ENCODE measurements at regions of chrX and their contacts with region 1.

Region 1: DNA sequence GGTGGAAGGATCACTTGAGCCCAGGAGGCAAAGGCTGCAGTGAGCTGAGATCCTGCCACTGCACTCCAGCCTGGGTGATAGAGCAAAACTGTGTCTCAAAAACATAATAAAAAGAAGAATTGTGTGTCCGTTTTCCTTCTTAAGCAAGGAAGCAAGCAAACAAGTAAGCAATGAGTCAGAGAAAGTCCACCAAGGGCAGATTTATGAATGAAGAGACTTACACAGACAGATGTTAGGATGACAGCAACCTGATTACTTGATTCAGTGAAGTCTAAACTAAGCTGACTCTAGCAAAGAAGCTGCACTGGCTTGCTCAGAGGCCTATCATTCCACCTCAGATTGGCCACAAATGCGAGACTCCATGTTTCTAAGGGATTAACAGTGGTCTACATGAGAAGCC is 34.1 kb upstream of the SCML1 start:
- DNase-seq: no peak
- H3K4me3 Mint-ChIP-seq: peak overlapping the region; percentile 17
- H3K27ac Mint-ChIP-seq: peak overlapping the region; percentile 74
- H3K4me1 Mint-ChIP-seq: peaks cover 37% of the 10 kb centered on the region
- H3K27me3 Mint-ChIP-seq: no peaks in the 10 kb centered on the region
- CTCF ChIP-seq: no peak

Region 2: GRCh38 chrX:17521871-17522693 is 181.1 kb before region 1 on chrX:
- CTCF ChIA-PET with region 1: no interaction called
- intact Hi-C with region 1: no loop called
- DNase-seq: peak; percentile 54
- H3K4me3 Mint-ChIP-seq: no peak overlapping the region
- H3K27ac Mint-ChIP-seq: peak overlapping the region; percentile 18
- H3K4me1 Mint-ChIP-seq: peaks cover 19% of the 10 kb centered on the region
- H3K27me3 Mint-ChIP-seq: no peaks in the 10 kb centered on the region
- CTCF ChIP-seq: no peak

Region 3: GRCh38 chrX:17736856-17737706 is 33.9 kb after region 1 on chrX and contains the start of gene SCML1:
- CTCF ChIA-PET with region 1: no interaction called
- intact Hi-C with region 1: loop called (anchors 5 kb)
- DNase-seq: peak; percentile 95
- H3K4me3 Mint-ChIP-seq: peak within 1 kb of the TSS; percentile 87
- H3K27ac Mint-ChIP-seq: peak within 1 kb of the TSS; percentile 80
- H3K4me1 Mint-ChIP-seq: peaks cover 10% of the 10 kb centered on the region
- H3K27me3 Mint-ChIP-seq: no peaks in the 10 kb centered on the region
- CTCF ChIP-seq: no peak
- total RNA-seq, gene SCML1: 14.2 and 14.4 TPM in 2 replicates

Region 4: DNA sequence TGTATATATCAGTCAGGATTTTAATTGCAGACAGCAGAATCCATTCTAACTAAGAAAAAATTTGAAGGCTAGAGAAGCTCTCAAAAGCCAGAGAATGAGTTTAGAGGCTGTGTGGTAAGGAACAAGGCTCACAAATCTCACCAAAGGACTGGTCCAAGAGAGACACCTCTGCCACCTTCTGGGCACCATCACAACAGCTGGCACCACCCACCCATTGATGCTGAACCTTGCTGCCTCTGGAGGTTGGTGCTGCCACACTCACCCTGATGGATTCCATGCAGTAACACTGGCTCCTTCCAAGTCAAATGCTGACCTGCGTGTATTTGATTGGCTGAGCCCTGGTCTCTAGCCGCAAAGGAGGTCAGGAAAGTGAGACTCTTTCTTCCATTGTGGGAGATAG is 416.7 kb after region 1 on chrX:
- CTCF ChIA-PET with region 1: no interaction called
- intact Hi-C with region 1: no loop called
- DNase-seq: no peak
- H3K4me3 Mint-ChIP-seq: no peak overlapping the region
- H3K27ac Mint-ChIP-seq: no peak overlapping the region
- H3K4me1 Mint-ChIP-seq: no peaks in the 10 kb centered on the region
- H3K27me3 Mint-ChIP-seq: peaks cover 76% of the 10 kb centered on the region
- CTCF ChIP-seq: no peak

Measured in Calu3 (cell line).